Heart right ventricle (tissue), 16 donors: ENCODE measurements at regions of chr9 and their contacts with region 1.

Region 1: DNA sequence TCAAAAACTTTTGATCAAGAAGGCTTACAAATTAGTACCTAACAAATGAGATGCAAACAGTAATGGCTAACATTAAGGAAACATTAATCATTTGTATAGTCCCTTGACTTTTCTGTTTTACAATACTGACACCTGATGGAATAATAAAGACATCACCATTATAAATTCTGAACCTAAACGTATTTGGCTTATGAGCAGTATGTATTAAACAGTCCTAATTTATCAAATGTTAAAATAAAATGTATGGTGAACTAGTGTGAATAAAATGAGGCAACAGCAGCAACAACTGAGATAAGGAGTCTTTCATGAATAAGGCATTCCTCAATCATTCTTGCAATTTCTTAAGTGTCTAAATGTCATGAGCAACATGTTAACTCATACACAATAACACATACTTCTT is 6.0 kb downstream of the PUM3 start:
- DNase-seq: no peak
- ATAC-seq: peak in 6 of 8 donors; percentile 48 to 75 (median 65)
- H3K4me3 ChIP-seq: peak overlapping the region in 6 of 10 donors; percentile 24 to 45 (median 35)
- H3K27ac ChIP-seq: peak overlapping the region in 7 of 10 donors; percentile 28 to 69 (median 48)
- H3K4me1 ChIP-seq: peaks cover 6 to 56% (median 51%) of the 10 kb centered on the region in 9 donors
- H3K27me3 ChIP-seq: no peaks in the 10 kb centered on the region
- CTCF ChIP-seq: peak in 8 of 9 donors; percentile 16 to 63 (median 52)

Region 2: GRCh38 chr9:2132484-2133082 is 705.3 kb before region 1 on chr9:
- intact Hi-C with region 1: loop called in 6 of 10 experiments (anchors 2 to 10 kb)
- DNase-seq: no peak
- ATAC-seq: peak in 2 of 8 donors; percentile 26 to 37
- H3K4me3 ChIP-seq: no peak overlapping the region
- H3K27ac ChIP-seq: peak overlapping the region in 3 of 10 donors; percentile 0 to 6 (median 4)
- H3K4me1 ChIP-seq: peaks cover 5 to 63% (median 40%) of the 10 kb centered on the region in 9 donors
- H3K27me3 ChIP-seq: no peaks in the 10 kb centered on the region
- CTCF ChIP-seq: peak; percentile 61 to 86 (median 74)

Region 3: GRCh38 chr9:2469681-2470221 is 368.2 kb before region 1 on chr9:
- intact Hi-C with region 1: loop called in 1 of 10 experiments (anchors 10 kb)
- DNase-seq: peak; percentile 23 to 63
- ATAC-seq: peak; percentile 82 to 95 (median 90)
- H3K4me3 ChIP-seq: no peak overlapping the region
- H3K27ac ChIP-seq: peak overlapping the region in 5 of 10 donors; percentile 3 to 59 (median 18)
- H3K4me1 ChIP-seq: peaks cover 0 to 40% (median 7%) of the 10 kb centered on the region in 9 donors
- H3K27me3 ChIP-seq: no peaks in the 10 kb centered on the region
- CTCF ChIP-seq: peak in 3 of 9 donors; percentile 26 to 28 (median 28)

Region 4: GRCh38 chr9:2739063-2739462 is 98.9 kb before region 1 on chr9:
- intact Hi-C with region 1: loop called in 1 of 10 experiments (anchors 10 kb)
- DNase-seq: no peak
- ATAC-seq: no peak
- H3K4me3 ChIP-seq: no peak overlapping the region
- H3K27ac ChIP-seq: no peak overlapping the region
- H3K4me1 ChIP-seq: peaks cover 0 to 7% (median 0%) of the 10 kb centered on the region in 9 donors
- H3K27me3 ChIP-seq: no peaks in the 10 kb centered on the region
- CTCF ChIP-seq: peak in 1 of 9 donors; percentile 5